GM13976 (cell line): ENCODE measurements at regions of chr6 and their contacts with region 1.

Region 1: GRCh38 chr6:125314019-125314581 is 12.3 kb upstream of the HDDC2 start:
- DNase-seq: peak; percentile 38
- CTCF ChIP-seq: peak; percentile 67

Region 2: GRCh38 chr6:124903791-124904190 is 410.3 kb before region 1 on chr6:
- in situ Hi-C with region 1: no loop called
- DNase-seq: no peak
- CTCF ChIP-seq: no peak

Region 3: GRCh38 chr6:125512621-125513020 is 198.5 kb after region 1 on chr6:
- in situ Hi-C with region 1: loop called (anchors 10 kb)
- DNase-seq: no peak
- CTCF ChIP-seq: peak; percentile 54

Region 4: DNA sequence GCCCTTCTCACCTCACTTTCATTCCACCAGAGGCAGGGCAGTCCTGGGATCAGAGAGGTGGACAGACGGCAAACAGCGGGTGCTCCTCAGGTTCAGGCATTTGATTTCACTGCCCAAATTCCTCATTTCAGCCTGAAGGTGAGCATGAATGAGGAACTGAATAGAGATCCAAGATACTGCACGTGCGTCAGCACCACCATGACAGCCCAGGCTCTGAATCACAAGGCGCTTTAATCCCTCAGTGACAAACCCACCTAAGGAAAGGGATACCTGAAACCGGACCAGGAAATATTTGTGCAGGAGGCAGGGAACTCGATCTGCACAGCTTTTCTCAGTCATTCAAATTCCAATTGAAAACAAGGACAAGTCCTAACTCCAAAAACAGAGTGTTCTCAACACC is 260.5 kb after region 1 on chr6:
- in situ Hi-C with region 1: no loop called
- DNase-seq: no peak
- CTCF ChIP-seq: no peak

Region 5: DNA sequence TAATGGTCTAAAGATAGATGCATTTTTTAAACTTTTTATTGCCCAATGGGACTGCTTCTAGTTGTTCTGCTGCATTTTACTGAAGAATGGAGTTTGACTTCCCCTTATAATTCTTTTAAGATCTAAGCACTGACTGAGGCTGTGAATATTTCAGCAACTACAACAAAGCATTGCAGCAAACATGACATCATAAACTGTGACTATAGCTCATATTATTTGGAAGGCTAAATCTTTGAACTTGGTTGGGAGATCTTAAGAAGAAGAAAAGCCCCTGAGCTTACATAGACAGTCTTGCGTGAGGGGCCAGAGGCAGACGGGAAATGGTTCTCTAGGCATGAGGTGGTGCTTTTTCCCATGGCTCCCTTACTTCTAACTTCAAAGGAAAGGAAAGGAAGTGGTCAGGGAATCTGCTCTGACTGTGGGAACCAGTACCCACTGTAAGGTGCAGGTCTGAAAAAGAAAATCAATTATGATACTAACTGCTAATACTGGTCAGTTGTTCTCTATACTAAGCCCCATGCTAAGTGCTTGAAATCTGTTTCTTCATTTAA is 450.1 kb after region 1 on chr6:
- in situ Hi-C with region 1: loop called (anchors 5 kb)
- DNase-seq: no peak
- CTCF ChIP-seq: no peak

Region 6: DNA sequence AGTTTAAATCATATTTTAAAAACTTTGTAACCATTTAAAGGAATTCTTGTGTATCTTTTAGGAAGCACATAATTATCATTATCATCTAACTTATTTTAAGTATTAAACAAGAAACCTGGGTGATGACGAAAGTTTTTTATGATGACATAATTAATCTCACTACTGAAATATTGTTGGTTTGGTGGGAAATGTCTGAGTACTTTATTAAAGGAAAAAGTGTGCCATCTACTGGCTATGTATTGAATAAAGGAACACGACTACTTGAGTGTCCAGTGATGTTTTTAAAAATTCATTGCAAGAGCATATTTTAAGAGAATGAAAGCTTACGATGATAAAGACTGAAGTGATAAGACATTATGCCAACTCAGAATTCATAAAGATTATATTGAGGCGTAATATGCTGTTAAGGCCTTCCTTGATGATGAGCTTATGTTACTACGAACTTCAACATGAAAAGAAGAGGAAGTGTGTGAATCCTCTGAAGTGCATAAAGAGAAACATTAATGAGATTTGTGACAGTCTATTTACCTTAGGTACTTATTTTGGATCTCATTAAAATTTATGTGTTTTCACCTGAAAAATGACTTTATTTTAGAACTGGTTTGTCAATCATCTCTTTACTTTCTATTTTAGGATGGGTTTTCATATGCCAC is 660.2 kb after region 1 on chr6:
- in situ Hi-C with region 1: loop called (anchors 10 kb)
- DNase-seq: peak; percentile 50
- CTCF ChIP-seq: peak; percentile 36